Adrenal gland (tissue), 19 donors: ENCODE measurements at regions of chr12 and their contacts with region 1.

Region 1: GRCh38 chr12:14249368-14249767 is 116.1 kb upstream of the ATF7IP start:
- DNase-seq: no peak
- H3K4me3 ChIP-seq: no peak overlapping the region
- H3K27ac ChIP-seq: no peak overlapping the region
- H3K4me1 ChIP-seq: peaks cover 0 to 13% of the 10 kb centered on the region in 2 donors
- H3K27me3 ChIP-seq: no peaks in the 10 kb centered on the region
- CTCF ChIP-seq: no peak
- POLR2A ChIP-seq: no peak

Region 2: GRCh38 chr12:14356147-14356546 is 106.8 kb after region 1 on chr12:
- intact Hi-C with region 1: no loop called
- DNase-seq: no peak
- H3K4me3 ChIP-seq: no peak overlapping the region
- H3K27ac ChIP-seq: no peak overlapping the region
- H3K4me1 ChIP-seq: no peaks in the 10 kb centered on the region
- H3K27me3 ChIP-seq: no peaks in the 10 kb centered on the region
- CTCF ChIP-seq: no peak
- POLR2A ChIP-seq: no peak

Region 3: DNA sequence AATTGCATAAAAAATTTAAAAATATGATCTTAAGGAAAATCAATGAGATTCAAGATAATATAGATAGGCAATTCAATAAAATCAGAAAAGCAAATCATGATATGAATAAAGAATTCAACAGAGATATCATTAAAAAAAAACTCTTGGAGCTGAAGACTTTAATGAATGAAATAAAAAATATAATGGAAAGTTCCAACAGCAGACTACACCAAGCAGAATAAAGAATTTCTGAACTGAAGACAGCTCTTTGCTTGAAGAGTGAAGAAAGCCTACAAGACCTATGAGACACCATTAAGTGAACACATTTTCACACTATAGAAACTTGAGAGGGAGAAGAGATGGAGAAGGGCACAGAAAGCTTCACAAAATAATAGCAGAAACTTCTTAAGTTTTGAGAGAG is 272.5 kb after region 1 on chr12:
- intact Hi-C with region 1: no loop called
- DNase-seq: no peak
- H3K4me3 ChIP-seq: no peak overlapping the region
- H3K27ac ChIP-seq: no peak overlapping the region
- H3K4me1 ChIP-seq: no peaks in the 10 kb centered on the region
- H3K27me3 ChIP-seq: no peaks in the 10 kb centered on the region
- CTCF ChIP-seq: no peak
- POLR2A ChIP-seq: no peak

Region 4: DNA sequence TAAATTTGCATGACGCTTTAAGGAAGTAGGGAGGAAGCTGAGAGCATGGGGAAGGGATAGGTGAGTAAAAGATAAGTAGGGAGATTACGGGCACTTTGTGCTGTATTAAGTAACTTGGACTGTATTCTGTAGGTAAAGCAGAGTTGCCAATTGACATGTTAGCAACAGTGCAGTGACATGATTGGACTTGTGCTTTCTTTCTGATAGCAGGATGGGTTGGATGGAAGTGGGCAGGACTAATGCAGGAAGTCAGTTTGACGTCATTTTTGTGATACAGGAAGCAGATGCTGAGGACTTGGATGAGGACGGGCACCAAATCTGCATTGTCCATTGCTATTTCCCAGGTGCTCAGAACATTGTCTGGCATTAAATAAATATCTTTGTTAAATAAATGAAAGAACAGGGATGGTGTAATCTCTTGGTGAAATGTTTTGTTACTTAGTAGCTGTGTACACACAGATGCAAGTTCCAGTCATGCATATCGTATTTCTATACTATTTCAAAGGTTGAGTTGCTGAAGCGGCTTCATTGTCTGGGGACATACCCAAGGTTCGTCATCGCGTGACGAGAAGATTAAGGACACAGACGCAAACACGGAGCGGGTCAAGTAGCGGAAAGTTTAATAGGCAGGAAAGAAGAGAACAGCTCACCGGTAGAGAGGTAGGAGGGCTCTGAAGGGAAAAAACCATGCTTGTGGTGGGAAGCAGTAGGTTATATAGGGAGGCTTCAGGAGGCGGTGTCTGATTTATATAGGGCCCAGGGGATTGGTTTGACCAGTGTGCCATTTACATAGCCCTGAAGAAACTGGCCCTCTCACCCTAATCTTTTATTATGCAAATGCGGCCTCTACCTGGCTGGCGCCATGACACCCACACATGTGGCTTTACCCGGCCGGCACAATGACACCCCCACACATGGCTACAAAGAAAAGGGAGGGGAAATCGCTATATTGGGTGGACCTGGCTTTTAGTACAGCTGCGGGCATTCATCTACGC is 416.3 kb after region 1 on chr12:
- intact Hi-C with region 1: loop called in 1 of 2 experiments (anchors 5 kb)
- DNase-seq: no peak
- H3K4me3 ChIP-seq: no peak overlapping the region
- H3K27ac ChIP-seq: no peak overlapping the region
- H3K4me1 ChIP-seq: no peaks in the 10 kb centered on the region
- H3K27me3 ChIP-seq: no peaks in the 10 kb centered on the region
- CTCF ChIP-seq: no peak
- POLR2A ChIP-seq: no peak